K562 (cell line): ENCODE measurements at regions of chr6 and their contacts with region 1.

Region 1: DNA sequence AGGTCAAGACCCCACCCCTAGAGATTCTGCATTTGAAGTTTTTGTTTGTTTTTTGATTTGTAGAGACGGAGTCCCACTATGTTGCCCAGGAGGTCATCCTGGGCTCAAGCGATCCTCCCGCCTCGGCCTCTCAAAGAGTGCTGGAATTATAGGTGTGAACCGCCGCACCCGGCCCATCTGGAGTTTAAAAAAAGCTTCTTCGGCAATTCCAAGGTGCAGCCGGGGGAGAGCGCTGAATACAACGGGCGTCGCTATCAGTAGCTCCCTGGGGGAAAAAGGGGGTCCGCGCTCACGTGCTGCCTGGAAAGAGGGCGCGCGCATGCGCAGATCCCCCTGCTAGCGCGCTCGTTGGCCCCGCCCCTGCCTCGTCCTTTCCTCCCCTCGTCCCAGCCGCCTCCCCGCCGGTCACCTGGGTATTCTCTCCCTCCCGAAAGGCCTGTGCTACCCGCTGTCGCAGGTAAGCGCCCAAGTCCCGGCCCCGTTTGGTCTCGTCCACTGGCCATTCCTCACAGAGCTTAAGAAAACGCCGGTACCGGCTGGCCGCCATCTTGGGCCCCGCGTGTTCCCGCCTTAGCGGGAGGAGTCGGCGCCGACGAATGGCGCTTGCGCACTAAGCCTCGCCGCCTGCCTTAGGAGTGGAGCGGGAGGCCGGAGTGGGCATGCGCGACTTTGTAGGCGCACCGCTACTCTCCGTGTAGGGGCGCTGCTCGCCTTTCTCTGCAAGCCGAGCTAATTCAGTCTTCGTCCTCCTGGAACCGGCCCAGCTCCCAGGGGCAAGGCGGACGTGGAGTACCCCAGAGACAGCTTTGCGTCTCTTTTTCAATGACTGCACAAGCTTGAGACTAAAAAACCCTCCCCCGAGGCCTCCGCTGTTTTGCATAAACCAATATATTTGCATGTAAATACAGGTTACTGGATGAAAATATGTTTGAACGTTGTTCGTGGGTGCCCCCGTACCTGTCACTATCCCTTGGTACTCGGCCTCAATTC is at the start of gene UQCC2:
- DNase-seq: peak; percentile 99 to 100 (median 100)
- ATAC-seq: peak; percentile 98
- H3K4me3 ChIP-seq: peak within 1 kb of the TSS; percentile 58
- H3K27ac ChIP-seq: peak within 1 kb of the TSS; percentile 93
- H3K4me1 ChIP-seq: peaks cover 12 to 19% of the 10 kb centered on the region in 2 experiments
- H3K27me3 ChIP-seq: peaks cover 0 to 11% of the 10 kb centered on the region in 2 experiments; a peak in 4 of 5 replicates
- CTCF ChIP-seq: peak; percentile 91 to 98 (median 93)
- EP300 ChIP-seq: 0 out of 2 replicates have a peak, but pooled peaks have one; percentile 21
- POLR2A ChIP-seq: peak; percentile 99
- RAD21 ChIP-seq: peak; percentile 84 to 92
- polyA plus RNA-seq, gene UQCC2: 832 to 927 TPM

Region 2: GRCh38 chr6:33508935-33509926 is 202.2 kb before region 1 on chr6:
- CTCF ChIA-PET with region 1: no interaction called
- POLR2A ChIA-PET with region 1: no interaction called
- in situ Hi-C with region 1: no loop called
- intact Hi-C with region 1: no loop called
- DNase-seq: peak in 1 of 4 experiments; percentile 37
- ATAC-seq: peak; percentile 46; the same call in 2 of the 3 replicates
- H3K4me3 ChIP-seq: no peak overlapping the region
- H3K27ac ChIP-seq: no peak overlapping the region
- H3K4me1 ChIP-seq: peaks cover 12 to 18% of the 10 kb centered on the region in 2 experiments; a peak in 4 of 5 replicates
- H3K27me3 ChIP-seq: peaks cover 14 to 20% of the 10 kb centered on the region in 2 experiments; a peak in 4 of 5 replicates
- CTCF ChIP-seq: no peak; a peak in 1 of 6 replicates
- EP300 ChIP-seq: no peak
- POLR2A ChIP-seq: no peak
- RAD21 ChIP-seq: no peak

Region 3: GRCh38 chr6:33654831-33655554 is 56.4 kb before region 1 on chr6:
- CTCF ChIA-PET with region 1: no interaction called
- POLR2A ChIA-PET with region 1: no interaction called
- in situ Hi-C with region 1: no loop called
- intact Hi-C with region 1: no loop called
- DNase-seq: no peak
- ATAC-seq: no peak
- H3K4me3 ChIP-seq: no peak overlapping the region
- H3K27ac ChIP-seq: no peak overlapping the region
- H3K4me1 ChIP-seq: peaks cover 0 to 4% of the 10 kb centered on the region in 2 experiments; a peak in 1 of 5 replicates
- H3K27me3 ChIP-seq: no peaks in the 10 kb centered on the region
- CTCF ChIP-seq: no peak
- EP300 ChIP-seq: no peak
- POLR2A ChIP-seq: no peak
- RAD21 ChIP-seq: no peak

Region 4: DNA sequence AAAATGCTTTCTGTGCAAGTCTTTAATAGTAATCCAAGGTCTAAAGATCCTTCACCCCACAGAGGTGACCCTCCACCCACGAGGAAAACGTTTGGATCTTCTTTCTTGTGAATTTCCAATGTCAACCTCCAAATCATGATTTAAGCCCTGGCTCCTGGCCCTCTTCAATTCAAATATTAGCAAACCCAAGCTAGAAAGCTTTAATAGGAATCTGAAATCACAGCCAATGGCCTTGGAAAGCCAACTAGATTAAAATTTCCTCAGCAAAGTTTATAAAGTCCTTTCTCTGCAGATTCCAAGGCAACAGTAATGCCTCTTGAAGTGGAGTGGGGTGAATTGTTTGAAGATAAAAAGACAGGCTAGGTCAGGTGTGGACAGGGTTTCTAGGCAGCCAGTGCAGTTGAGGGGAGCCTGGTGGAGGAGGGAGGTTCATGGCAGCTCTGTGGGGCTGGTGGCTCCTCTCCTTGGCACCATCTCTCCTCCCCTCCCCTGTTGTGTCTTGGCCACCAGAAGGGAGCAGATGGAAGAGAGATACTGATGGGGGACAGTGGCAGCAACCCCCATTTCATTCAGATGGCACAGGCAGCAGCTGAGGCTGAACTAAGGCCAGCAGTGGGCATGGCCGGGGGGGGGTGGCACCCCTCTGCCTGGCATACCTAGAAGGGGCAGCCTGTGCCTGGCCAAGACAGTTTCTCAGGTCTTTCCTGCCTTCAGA is 12.1 kb after region 1 on chr6:
- CTCF ChIA-PET with region 1: no interaction called
- POLR2A ChIA-PET with region 1: interaction called, 14 read pairs
- in situ Hi-C with region 1: no loop called
- intact Hi-C with region 1: no loop called
- DNase-seq: no peak
- ATAC-seq: no peak
- H3K4me3 ChIP-seq: no peak overlapping the region
- H3K27ac ChIP-seq: no peak overlapping the region
- H3K4me1 ChIP-seq: no peaks in the 10 kb centered on the region
- H3K27me3 ChIP-seq: peaks cover 65 to 88% of the 10 kb centered on the region in 2 experiments
- CTCF ChIP-seq: no peak
- EP300 ChIP-seq: no peak
- POLR2A ChIP-seq: no peak
- RAD21 ChIP-seq: no peak

Region 5: DNA sequence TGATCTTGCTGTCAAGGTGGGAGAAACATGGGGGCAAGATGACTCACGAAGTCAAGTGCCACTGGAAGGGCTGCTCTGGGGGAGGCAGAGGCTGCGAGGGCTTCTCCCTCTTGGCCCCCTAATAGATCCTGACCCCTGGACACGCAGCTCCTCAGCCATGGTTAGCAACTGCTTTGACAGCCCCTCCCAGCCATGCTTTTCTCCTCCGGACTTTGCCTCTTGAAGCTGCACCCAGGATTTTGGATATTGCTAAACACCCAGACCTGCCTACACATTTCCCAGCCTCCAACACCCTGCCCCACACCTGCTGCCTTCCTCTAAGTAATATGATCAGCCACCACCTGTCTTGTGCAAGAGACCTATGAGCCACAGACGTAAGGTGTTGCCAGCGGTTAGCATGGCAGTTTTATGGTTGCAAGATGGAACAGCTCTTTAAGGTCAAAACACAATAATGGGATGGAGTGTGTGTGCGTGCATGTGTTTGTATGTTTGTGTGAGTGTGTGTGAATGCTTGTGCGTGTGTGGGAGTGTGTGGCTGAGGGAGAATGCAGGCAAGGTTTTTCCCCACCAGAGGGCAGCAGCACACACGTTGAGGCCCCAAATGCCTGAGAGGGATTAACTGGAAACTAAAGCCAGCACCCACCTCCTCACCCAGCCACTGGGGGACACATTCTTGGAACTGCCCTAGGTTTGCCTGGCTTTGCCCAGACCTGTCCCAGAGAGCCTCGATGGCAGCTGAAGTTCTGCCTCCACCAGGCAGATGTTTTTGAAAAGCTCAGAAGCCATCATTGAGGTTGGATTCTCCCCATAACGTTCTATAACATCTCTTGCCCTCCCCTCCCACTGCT is 32.8 kb after region 1 on chr6:
- CTCF ChIA-PET with region 1: interaction called, 5 read pairs
- POLR2A ChIA-PET with region 1: interaction called, 4 read pairs
- in situ Hi-C with region 1: no loop called
- intact Hi-C with region 1: loop called (anchors 1 kb)
- DNase-seq: peak; percentile 84 to 91 (median 87)
- ATAC-seq: peak; percentile 86
- H3K4me3 ChIP-seq: no peak overlapping the region
- H3K27ac ChIP-seq: no peak overlapping the region
- H3K4me1 ChIP-seq: peaks cover 9 to 11% of the 10 kb centered on the region in 2 experiments; a peak in 2 of 5 replicates
- H3K27me3 ChIP-seq: peaks cover 28 to 60% of the 10 kb centered on the region in 2 experiments; a peak in 4 of 5 replicates
- CTCF ChIP-seq: peak; percentile 94 to 97 (median 96)
- EP300 ChIP-seq: no peak
- POLR2A ChIP-seq: no peak
- RAD21 ChIP-seq: peak; percentile 66 to 91